CD8-positive, alpha-beta T cell (primary cell): ENCODE measurements at regions of chr2 and their contacts with region 1.

Region 1: DNA sequence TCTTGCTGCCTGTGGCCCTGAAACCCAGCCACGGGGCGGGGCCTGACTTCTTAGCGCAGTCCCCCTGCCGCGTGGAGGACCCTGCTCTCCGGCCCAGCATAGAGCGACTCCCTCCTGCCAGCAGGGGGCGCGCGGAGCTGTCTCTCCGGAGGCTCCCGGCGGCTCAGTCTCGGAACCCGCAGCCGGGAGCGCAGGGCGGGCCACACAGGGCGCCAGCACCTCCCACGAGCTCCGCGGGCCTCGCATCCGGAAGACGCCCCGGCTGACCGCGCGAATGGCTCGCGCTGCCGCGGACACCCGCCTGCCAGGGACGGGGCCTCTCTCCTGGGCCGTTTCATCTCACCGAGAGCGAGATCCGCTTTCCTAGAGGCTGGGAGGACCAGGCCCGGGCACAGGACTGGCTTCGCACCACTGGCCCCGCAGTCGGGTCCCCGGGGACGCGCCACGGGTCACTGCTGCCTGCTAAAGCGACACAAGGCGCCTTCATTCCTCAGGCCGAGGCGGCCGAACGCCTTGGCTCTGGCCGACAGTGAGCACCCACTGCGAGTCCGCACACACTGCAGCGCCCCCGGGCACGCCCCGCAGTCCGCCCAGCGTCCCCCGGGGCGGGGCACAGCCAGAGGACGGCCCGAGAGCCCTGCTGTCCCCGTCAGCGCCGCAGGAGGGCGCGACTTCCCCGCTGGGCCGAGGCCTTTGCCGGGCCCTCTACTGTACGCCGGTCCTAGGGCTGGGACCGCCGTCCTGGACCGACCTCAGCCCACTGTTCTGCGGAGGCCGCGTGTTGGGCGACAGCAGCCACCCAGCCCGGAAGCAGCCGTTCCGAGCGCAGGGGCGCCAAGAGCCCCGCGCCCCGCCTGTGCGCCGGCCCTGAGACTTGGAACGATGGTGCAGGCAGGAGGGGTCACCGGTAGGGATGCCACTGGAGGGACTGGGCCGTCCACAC is 39.0 kb upstream of the ARHGEF4 start:
- DNase-seq: peak; percentile 77 to 96 (median 92)
- ATAC-seq: peak; percentile 89
- H3K4me3 ChIP-seq: peak overlapping the region; percentile 69 to 96
- H3K4me3 Mint-ChIP-seq: peak overlapping the region; percentile 75
- H3K27ac ChIP-seq: peak overlapping the region; percentile 64 to 88
- H3K27ac Mint-ChIP-seq: peak overlapping the region; percentile 64
- H3K4me1 ChIP-seq: peaks cover 10% of the 10 kb centered on the region
- H3K4me1 Mint-ChIP-seq: peaks cover 6% of the 10 kb centered on the region
- H3K27me3 ChIP-seq: no peaks in the 10 kb centered on the region
- H3K27me3 Mint-ChIP-seq: peaks cover 2% of the 10 kb centered on the region
- CTCF ChIP-seq: peak; percentile 67

Region 2: GRCh38 chr2:130332271-130333073 is 465.3 kb before region 1 on chr2:
- CTCF ChIA-PET with region 1: no interaction called
- POLR2A ChIA-PET with region 1: no interaction called
- intact Hi-C with region 1: loop called in 1 of 2 experiments (anchors 10 kb)
- DNase-seq: peak; percentile 48 to 80 (median 72)
- ATAC-seq: peak; percentile 87
- H3K4me3 ChIP-seq: no peak overlapping the region
- H3K4me3 Mint-ChIP-seq: peak overlapping the region; percentile 65
- H3K27ac ChIP-seq: no peak overlapping the region
- H3K27ac Mint-ChIP-seq: no peak overlapping the region
- H3K4me1 ChIP-seq: peaks cover 6% of the 10 kb centered on the region
- H3K4me1 Mint-ChIP-seq: peaks cover 8% of the 10 kb centered on the region
- H3K27me3 ChIP-seq: peaks cover 0 to 4% of the 10 kb centered on the region in 2 experiments
- H3K27me3 Mint-ChIP-seq: peaks cover 27% of the 10 kb centered on the region
- CTCF ChIP-seq: peak; percentile 87

Region 3: DNA sequence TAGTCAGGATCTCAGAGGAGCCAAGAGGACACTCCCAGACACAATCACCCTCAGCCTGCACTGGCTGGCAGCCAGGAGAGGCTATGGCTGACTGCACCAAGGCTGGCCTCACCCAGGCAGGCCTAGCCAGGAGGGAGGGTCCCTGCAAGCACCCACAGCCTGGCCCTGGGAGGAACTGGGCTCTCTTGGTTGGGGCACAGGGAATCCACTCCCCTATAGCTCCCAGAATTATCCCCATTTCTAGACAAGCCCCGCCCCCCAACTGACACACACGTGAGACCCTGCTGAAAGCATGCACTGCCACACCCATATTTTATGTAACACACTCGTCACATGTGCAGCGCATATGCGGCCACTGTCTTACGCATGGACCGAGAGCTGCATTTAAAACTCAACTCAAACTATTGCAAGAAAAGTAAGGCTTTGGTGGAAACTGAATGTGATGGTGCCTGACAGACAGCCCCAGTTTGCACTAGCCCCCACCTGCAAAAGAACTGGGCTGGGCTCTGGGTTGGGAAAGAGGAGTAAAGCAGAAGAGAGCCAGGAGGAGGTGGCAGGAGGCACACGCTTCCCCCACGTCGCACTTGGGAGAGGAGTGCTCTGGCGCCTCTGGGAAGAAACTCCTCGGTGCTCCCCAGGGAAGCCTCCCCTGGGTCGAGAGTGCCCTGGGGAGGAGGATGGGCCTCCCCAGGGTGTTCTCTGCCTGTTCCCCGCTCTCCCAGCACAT is 10.1 kb after region 1 on chr2:
- CTCF ChIA-PET with region 1: interaction called, 14 read pairs
- POLR2A ChIA-PET with region 1: no interaction called
- intact Hi-C with region 1: no loop called
- DNase-seq: peak in 1 of 9 experiments; percentile 40
- ATAC-seq: no peak
- H3K4me3 ChIP-seq: no peak overlapping the region
- H3K4me3 Mint-ChIP-seq: no peak overlapping the region
- H3K27ac ChIP-seq: no peak overlapping the region
- H3K27ac Mint-ChIP-seq: no peak overlapping the region
- H3K4me1 ChIP-seq: peaks cover 5% of the 10 kb centered on the region
- H3K4me1 Mint-ChIP-seq: peaks cover 7% of the 10 kb centered on the region
- H3K27me3 ChIP-seq: no peaks in the 10 kb centered on the region
- H3K27me3 Mint-ChIP-seq: peaks cover 7% of the 10 kb centered on the region
- CTCF ChIP-seq: no peak

Region 4: DNA sequence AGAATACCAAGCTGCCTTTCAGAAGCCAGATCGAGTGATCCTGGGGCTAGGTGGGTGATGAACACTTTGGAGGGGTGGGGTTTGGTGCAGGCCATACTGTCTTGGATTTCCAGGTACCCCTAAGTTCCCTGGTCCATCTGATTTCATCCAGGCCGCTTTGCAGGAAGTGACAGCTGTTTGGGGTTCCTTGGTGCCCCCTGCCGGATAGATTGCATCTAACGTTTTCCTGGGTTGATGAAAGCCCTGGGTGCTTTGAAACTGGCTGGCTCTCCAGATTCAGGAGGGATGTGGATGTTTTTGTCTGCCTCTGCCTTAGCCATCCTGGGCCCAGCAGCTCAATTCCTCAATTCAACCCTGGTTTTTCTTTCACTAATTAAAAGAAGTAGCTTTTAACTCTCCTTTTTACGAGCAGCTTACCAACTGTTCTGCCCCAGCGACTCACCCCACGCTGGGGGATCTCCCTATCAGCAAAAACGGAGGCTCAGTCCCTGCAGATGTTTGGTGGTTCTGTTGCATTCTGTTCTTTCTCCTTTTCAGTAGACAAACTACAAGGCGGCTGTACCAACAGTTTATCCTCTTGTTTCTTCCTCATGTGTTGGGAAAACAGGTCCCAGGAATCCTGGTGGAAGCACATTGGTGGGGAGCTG is 76.1 kb after region 1 on chr2:
- CTCF ChIA-PET with region 1: interaction called, 173 read pairs
- POLR2A ChIA-PET with region 1: interaction called, 10 read pairs
- intact Hi-C with region 1: loop called in 1 of 2 experiments (anchors 1 kb)
- DNase-seq: peak; percentile 43 to 80 (median 68)
- ATAC-seq: peak; percentile 71
- H3K4me3 ChIP-seq: no peak overlapping the region
- H3K4me3 Mint-ChIP-seq: no peak overlapping the region
- H3K27ac ChIP-seq: no peak overlapping the region
- H3K27ac Mint-ChIP-seq: no peak overlapping the region
- H3K4me1 ChIP-seq: no peaks in the 10 kb centered on the region
- H3K4me1 Mint-ChIP-seq: no peaks in the 10 kb centered on the region
- H3K27me3 ChIP-seq: no peaks in the 10 kb centered on the region
- H3K27me3 Mint-ChIP-seq: peaks cover 3% of the 10 kb centered on the region
- CTCF ChIP-seq: peak; percentile 61

Region 5: GRCh38 chr2:131093006-131093695 is 295.4 kb after region 1 on chr2 and contains the start of gene FAM168B:
- CTCF ChIA-PET with region 1: no interaction called
- POLR2A ChIA-PET with region 1: interaction called, 10 read pairs
- intact Hi-C with region 1: loop called in 1 of 2 experiments (anchors 5 kb)
- DNase-seq: peak; percentile 82 to 96 (median 88)
- ATAC-seq: peak; percentile 76
- H3K4me3 ChIP-seq: peak within 1 kb of the TSS; percentile 72 to 98
- H3K4me3 Mint-ChIP-seq: peak within 1 kb of the TSS; percentile 90
- H3K27ac ChIP-seq: peak within 1 kb of the TSS; percentile 89 to 94
- H3K27ac Mint-ChIP-seq: peak within 1 kb of the TSS; percentile 93
- H3K4me1 ChIP-seq: peaks cover 16% of the 10 kb centered on the region
- H3K4me1 Mint-ChIP-seq: peaks cover 26% of the 10 kb centered on the region
- H3K27me3 ChIP-seq: no peaks in the 10 kb centered on the region
- H3K27me3 Mint-ChIP-seq: no peaks in the 10 kb centered on the region
- CTCF ChIP-seq: no peak
- total RNA-seq, gene FAM168B: 87.3 to 91.7 TPM